ENCODE measurements at regions of chr3 and their contacts with region 1.

Region 1: GRCh38 chr3:182375916-182376315 is 417.4 kb upstream of the ATP11B start:
- DNase-seq: no peak
- H3K4me3 ChIP-seq: no peak overlapping the region
- H3K27ac ChIP-seq: no peak overlapping the region
- H3K4me1 ChIP-seq: no peaks in the 10 kb centered on the region
- H3K27me3 ChIP-seq: peaks cover 21% of the 10 kb centered on the region
- CTCF ChIP-seq: no peak

Region 2: DNA sequence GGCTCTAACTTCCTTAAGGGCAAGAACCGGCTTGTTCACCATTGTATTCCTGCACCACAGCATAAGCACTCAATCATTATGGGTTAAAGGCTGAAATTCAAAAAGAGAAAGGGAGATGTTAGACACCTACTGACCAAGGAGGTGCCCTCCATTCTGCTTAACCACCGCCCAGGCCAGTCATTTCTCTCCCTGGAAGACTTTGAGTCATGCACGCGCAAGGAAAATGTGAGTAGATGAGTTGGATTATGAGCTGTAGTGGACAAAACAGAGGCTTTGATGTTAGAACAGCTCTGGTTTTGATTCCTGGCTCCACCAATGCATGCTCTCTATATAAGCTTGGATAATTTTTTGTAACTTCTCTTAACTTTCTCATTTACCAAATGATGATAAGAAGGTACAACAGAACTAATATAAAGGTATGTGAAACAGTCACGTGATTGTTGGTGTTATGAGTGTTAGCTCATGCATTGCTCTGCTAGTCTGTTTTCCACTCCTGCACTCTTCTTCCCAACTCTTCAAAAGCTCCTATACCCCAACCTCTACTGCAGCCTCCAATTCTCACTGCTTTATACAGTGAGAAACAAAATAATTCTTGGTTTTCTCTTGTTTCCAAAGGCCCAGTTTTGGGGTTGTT is 269.0 kb after region 1 on chr3:
- CTCF ChIA-PET with region 1: no interaction called
- POLR2A ChIA-PET with region 1: interaction called, 30 read pairs
- intact Hi-C with region 1: no loop called
- DNase-seq: no peak
- H3K4me3 ChIP-seq: no peak overlapping the region
- H3K27ac ChIP-seq: no peak overlapping the region
- H3K4me1 ChIP-seq: no peaks in the 10 kb centered on the region
- H3K27me3 ChIP-seq: no peaks in the 10 kb centered on the region
- CTCF ChIP-seq: no peak